ENCODE measurements at regions of chr1 and their contacts with region 1.

Region 1: GRCh38 chr1:184954231-184954995 is 19.9 kb downstream of the NIBAN1 start:
- DNase-seq: peak; percentile 21
- H3K4me3 Mint-ChIP-seq: no peak overlapping the region
- H3K27ac Mint-ChIP-seq: no peak overlapping the region
- H3K4me1 Mint-ChIP-seq: peaks cover 10% of the 10 kb centered on the region
- H3K27me3 Mint-ChIP-seq: peaks cover 23% of the 10 kb centered on the region
- CTCF ChIP-seq: no peak

Region 2: GRCh38 chr1:184854496-184855140 is 99.8 kb before region 1 on chr1:
- CTCF ChIA-PET with region 1: no interaction called
- POLR2A ChIA-PET with region 1: no interaction called
- intact Hi-C with region 1: no loop called
- DNase-seq: no peak
- H3K4me3 Mint-ChIP-seq: no peak overlapping the region
- H3K27ac Mint-ChIP-seq: no peak overlapping the region
- H3K4me1 Mint-ChIP-seq: no peaks in the 10 kb centered on the region
- H3K27me3 Mint-ChIP-seq: peaks cover 81% of the 10 kb centered on the region
- CTCF ChIP-seq: no peak

Region 3: GRCh38 chr1:184866991-184867788 is 87.2 kb before region 1 on chr1:
- CTCF ChIA-PET with region 1: no interaction called
- POLR2A ChIA-PET with region 1: interaction called, 12 read pairs
- intact Hi-C with region 1: no loop called
- DNase-seq: peak; percentile 98
- H3K4me3 Mint-ChIP-seq: no peak overlapping the region
- H3K27ac Mint-ChIP-seq: no peak overlapping the region
- H3K4me1 Mint-ChIP-seq: peaks cover 8% of the 10 kb centered on the region
- H3K27me3 Mint-ChIP-seq: peaks cover 100% of the 10 kb centered on the region
- CTCF ChIP-seq: no peak

Region 4: DNA sequence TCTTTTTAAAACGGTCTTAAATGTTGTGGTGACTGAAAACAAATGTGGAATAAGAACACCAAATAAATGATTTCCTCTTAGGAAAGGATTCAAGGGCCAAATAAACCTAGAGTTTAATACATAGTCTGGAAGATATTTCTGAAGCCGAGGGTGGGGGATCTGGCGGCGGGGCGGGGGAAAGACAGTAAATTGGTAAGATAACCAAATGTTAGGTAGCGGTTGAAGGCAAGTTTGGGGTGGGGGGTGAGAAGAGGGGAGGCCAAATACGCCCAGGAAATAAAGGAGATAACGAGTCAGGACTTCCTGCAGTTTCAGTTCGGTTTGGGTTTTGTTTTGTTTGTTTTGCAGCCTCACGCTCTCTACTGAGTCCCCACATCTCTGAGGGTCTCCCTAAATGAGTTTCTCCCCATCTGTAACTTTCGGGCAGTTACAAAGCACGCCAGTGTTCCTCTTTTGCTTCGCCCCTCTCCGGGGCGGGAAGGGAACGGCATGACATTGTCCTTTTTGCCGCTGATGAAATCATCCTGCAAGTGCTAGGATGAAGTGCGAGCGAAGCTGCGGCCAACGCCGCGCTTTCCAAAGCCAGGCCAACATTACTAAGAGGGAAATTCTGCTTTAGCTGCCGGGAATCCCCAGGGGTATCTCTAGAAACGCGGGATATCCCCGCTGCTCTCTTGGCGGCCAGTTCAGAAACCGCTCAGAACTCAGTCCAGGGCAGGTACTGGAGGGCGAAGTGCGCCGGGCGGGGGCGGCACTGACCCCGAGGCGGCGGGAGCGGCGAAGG is 19.1 kb after region 1 on chr1:
- CTCF ChIA-PET with region 1: interaction called, 15 read pairs
- POLR2A ChIA-PET with region 1: interaction called, 8 read pairs
- intact Hi-C with region 1: no loop called
- DNase-seq: peak; percentile 51
- H3K4me3 Mint-ChIP-seq: peak overlapping the region; percentile 70
- H3K27ac Mint-ChIP-seq: peak overlapping the region; percentile 44
- H3K4me1 Mint-ChIP-seq: peaks cover 6% of the 10 kb centered on the region
- H3K27me3 Mint-ChIP-seq: peaks cover 85% of the 10 kb centered on the region
- CTCF ChIP-seq: no peak

Region 5: GRCh38 chr1:185096531-185096930 is 142.1 kb after region 1 on chr1:
- CTCF ChIA-PET with region 1: no interaction called
- POLR2A ChIA-PET with region 1: no interaction called
- intact Hi-C with region 1: no loop called
- DNase-seq: peak; percentile 24
- H3K4me3 Mint-ChIP-seq: no peak overlapping the region
- H3K27ac Mint-ChIP-seq: peak overlapping the region; percentile 57
- H3K4me1 Mint-ChIP-seq: peaks cover 11% of the 10 kb centered on the region
- H3K27me3 Mint-ChIP-seq: no peaks in the 10 kb centered on the region
- CTCF ChIP-seq: no peak

Region 6: GRCh38 chr1:185129708-185130107 is 175.3 kb after region 1 on chr1:
- CTCF ChIA-PET with region 1: no interaction called
- POLR2A ChIA-PET with region 1: no interaction called
- intact Hi-C with region 1: no loop called
- DNase-seq: no peak
- H3K4me3 Mint-ChIP-seq: no peak overlapping the region
- H3K27ac Mint-ChIP-seq: no peak overlapping the region
- H3K4me1 Mint-ChIP-seq: no peaks in the 10 kb centered on the region
- H3K27me3 Mint-ChIP-seq: no peaks in the 10 kb centered on the region
- CTCF ChIP-seq: no peak

Measured in MCF 10A (cell line).